ENCODE measurements at regions of chr12 and their contacts with region 1.

Region 1: GRCh38 chr12:68358532-68359485 is 26.6 kb upstream of the MDM1 start:
- DNase-seq: peak; percentile 71 to 76 (median 74)
- H3K4me3 ChIP-seq: no peak overlapping the region
- H3K4me3 Mint-ChIP-seq: no peak overlapping the region
- H3K27ac ChIP-seq: no peak overlapping the region
- H3K27ac Mint-ChIP-seq: peak overlapping the region; percentile 2 to 80 (median 65)
- H3K4me1 ChIP-seq: peaks cover 21% of the 10 kb centered on the region
- H3K4me1 Mint-ChIP-seq: peaks cover 18 to 35% (median 24%) of the 10 kb centered on the region in 4 donors
- H3K27me3 ChIP-seq: no peaks in the 10 kb centered on the region
- H3K27me3 Mint-ChIP-seq: no peaks in the 10 kb centered on the region

Region 2: GRCh38 chr12:68745904-68746571 is 387.2 kb after region 1 on chr12 and contains the start of gene SLC35E3:
- CTCF ChIA-PET with region 1: interaction called, 3 read pairs
- POLR2A ChIA-PET with region 1: interaction called, 3 read pairs
- intact Hi-C with region 1: loop called (anchors 5 kb)
- DNase-seq: peak; percentile 86 to 91 (median 88)
- H3K4me3 ChIP-seq: peak within 1 kb of the TSS; percentile 74 to 78
- H3K4me3 Mint-ChIP-seq: peak within 1 kb of the TSS; percentile 92 to 99 (median 98)
- H3K27ac ChIP-seq: peak within 1 kb of the TSS; percentile 69
- H3K27ac Mint-ChIP-seq: peak within 1 kb of the TSS; percentile 89 to 97 (median 93)
- H3K4me1 ChIP-seq: peaks cover 21% of the 10 kb centered on the region
- H3K4me1 Mint-ChIP-seq: peaks cover 26 to 46% (median 35%) of the 10 kb centered on the region in 4 donors
- H3K27me3 ChIP-seq: no peaks in the 10 kb centered on the region
- H3K27me3 Mint-ChIP-seq: no peaks in the 10 kb centered on the region
- total RNA-seq, gene SLC35E3: 8.2 to 11.5 TPM

Region 3: DNA sequence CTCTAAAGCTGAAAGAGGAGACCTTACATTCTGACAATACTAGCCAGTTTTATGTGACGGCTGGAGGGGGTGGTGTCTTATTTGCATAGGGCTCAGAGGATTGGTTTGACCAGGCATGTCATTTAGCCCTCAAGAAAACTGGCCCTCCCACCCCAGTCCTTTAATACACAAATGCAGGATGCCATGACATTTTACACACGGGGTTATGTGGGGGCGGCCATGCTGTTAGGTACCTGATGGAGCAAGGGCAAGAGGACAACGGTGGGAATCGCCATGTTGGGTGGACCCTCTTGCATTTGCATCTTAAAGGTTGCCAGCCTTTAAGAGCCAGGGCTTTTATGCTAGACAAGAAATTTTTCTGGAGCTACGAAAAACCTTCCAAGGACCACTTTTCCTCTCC is 472.5 kb after region 1 on chr12:
- CTCF ChIA-PET with region 1: interaction called, 9 read pairs
- POLR2A ChIA-PET with region 1: no interaction called
- intact Hi-C with region 1: loop called (anchors 1 kb)
- DNase-seq: no peak
- H3K4me3 ChIP-seq: no peak overlapping the region
- H3K4me3 Mint-ChIP-seq: no peak overlapping the region
- H3K27ac ChIP-seq: no peak overlapping the region
- H3K27ac Mint-ChIP-seq: peak overlapping the region in 1 of 7 donors; percentile 69
- H3K4me1 ChIP-seq: peaks cover 4% of the 10 kb centered on the region
- H3K4me1 Mint-ChIP-seq: peaks cover 5 to 13% (median 6%) of the 10 kb centered on the region in 4 donors
- H3K27me3 ChIP-seq: no peaks in the 10 kb centered on the region
- H3K27me3 Mint-ChIP-seq: no peaks in the 10 kb centered on the region

Region 4: GRCh38 chr12:68939505-68939904 is 580.7 kb after region 1 on chr12:
- CTCF ChIA-PET with region 1: no interaction called
- POLR2A ChIA-PET with region 1: no interaction called
- intact Hi-C with region 1: no loop called
- DNase-seq: no peak
- H3K4me3 ChIP-seq: no peak overlapping the region
- H3K4me3 Mint-ChIP-seq: no peak overlapping the region
- H3K27ac ChIP-seq: no peak overlapping the region
- H3K27ac Mint-ChIP-seq: no peak overlapping the region
- H3K4me1 ChIP-seq: no peaks in the 10 kb centered on the region
- H3K4me1 Mint-ChIP-seq: no peaks in the 10 kb centered on the region
- H3K27me3 ChIP-seq: no peaks in the 10 kb centered on the region
- H3K27me3 Mint-ChIP-seq: peaks cover 3 to 4% of the 10 kb centered on the region in 2 donors

Measured in CD4-positive, alpha-beta memory T cell (primary cell).